Breast epithelium (tissue), 4 donors: ENCODE measurements at regions of chr15 and their contacts with region 1.

Region 1: DNA sequence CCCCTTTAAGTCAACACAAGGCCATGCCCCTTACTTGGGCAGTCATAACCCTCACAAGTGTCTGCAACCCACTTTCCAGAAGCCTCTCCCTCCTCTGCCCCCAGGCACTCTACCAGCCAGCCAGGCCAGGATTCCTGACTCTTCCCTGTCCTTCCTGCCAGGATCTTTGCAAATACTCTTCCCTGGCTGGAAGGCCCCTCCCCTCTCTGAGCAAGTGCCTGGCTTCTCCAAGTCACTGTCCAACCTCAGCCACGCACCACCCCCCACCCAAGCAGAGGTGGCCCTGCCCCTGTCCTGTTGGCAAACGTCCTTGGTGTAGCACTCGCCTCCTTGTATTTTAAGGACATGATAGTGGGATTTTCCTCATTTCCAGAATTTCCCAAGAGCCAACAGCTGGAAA is 54.7 kb upstream of the USP3 start:
- DNase-seq: peak in 1 of 2 donors; percentile 64
- H3K4me3 ChIP-seq: no peak overlapping the region
- H3K27ac ChIP-seq: no peak overlapping the region
- H3K4me1 ChIP-seq: no peaks in the 10 kb centered on the region
- H3K27me3 ChIP-seq: no peaks in the 10 kb centered on the region
- CTCF ChIP-seq: no peak
- POLR2A ChIP-seq: no peak

Region 2: GRCh38 chr15:63407612-63408011 is 42.1 kb before region 1 on chr15:
- intact Hi-C with region 1: no loop called
- DNase-seq: no peak
- H3K4me3 ChIP-seq: no peak overlapping the region
- H3K27ac ChIP-seq: no peak overlapping the region
- H3K4me1 ChIP-seq: no peaks in the 10 kb centered on the region
- H3K27me3 ChIP-seq: no peaks in the 10 kb centered on the region
- CTCF ChIP-seq: no peak
- POLR2A ChIP-seq: no peak

Region 3: GRCh38 chr15:63417721-63418120 is 32.0 kb before region 1 on chr15:
- intact Hi-C with region 1: no loop called
- DNase-seq: no peak
- H3K4me3 ChIP-seq: no peak overlapping the region
- H3K27ac ChIP-seq: no peak overlapping the region
- H3K4me1 ChIP-seq: no peaks in the 10 kb centered on the region
- H3K27me3 ChIP-seq: no peaks in the 10 kb centered on the region
- CTCF ChIP-seq: no peak
- POLR2A ChIP-seq: no peak

Region 4: GRCh38 chr15:64305261-64305660 is 855.5 kb after region 1 on chr15:
- intact Hi-C with region 1: loop called (anchors 5 kb)
- DNase-seq: no peak
- H3K4me3 ChIP-seq: no peak overlapping the region
- H3K27ac ChIP-seq: no peak overlapping the region
- H3K4me1 ChIP-seq: no peaks in the 10 kb centered on the region
- H3K27me3 ChIP-seq: no peaks in the 10 kb centered on the region
- CTCF ChIP-seq: no peak
- POLR2A ChIP-seq: no peak